Spleen (tissue), 13 donors: ENCODE measurements at regions of chr15 and their contacts with region 1.

Region 1: DNA sequence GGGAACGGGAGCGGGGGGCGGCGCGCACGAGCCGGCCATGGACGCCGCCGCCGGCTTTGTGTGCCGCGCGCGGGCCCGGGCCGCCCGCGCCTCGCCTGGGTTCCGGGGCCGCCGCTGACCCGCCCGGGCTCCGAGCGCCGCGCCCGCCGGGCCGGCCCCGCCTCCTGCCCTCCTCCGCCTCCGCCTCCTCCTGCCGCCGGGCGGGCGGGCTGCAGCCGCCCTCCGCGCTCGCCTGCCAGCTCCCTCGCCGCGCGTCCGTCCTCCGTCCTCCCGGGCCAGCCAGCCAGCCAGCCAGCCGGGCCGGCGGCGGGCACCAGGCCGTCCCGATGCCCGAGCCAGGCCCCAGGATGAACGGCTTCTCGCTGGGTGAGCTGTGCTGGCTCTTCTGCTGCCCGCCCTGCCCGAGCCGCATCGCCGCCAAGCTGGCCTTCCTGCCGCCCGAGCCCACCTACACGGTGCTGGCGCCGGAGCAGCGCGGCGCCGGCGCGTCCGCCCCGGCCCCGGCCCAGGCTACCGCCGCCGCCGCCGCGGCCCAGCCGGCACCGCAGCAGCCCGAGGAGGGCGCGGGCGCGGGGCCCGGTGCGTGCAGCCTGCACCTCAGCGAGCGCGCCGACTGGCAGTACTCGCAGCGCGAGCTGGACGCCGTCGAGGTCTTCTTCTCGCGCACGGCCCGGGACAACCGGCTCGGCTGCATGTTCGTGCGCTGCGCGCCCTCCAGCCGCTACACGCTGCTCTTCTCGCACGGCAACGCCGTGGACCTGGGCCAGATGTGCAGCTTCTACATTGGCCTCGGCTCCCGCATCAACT is at the start of gene ABHD17C:
- DNase-seq: peak; percentile 91
- H3K4me3 ChIP-seq: peak within 1 kb of the TSS; percentile 69 to 91 (median 72)
- H3K27ac ChIP-seq: peak within 1 kb of the TSS; percentile 57 to 89 (median 85)
- H3K4me1 ChIP-seq: peaks cover 9 to 54% (median 32%) of the 10 kb centered on the region in 6 donors
- H3K27me3 ChIP-seq: no peaks in the 10 kb centered on the region
- CTCF ChIP-seq: no peak
- POLR2A ChIP-seq: no peak
- total RNA-seq, gene ABHD17C: 9.9 to 17.0 (median 11.7) TPM

Region 2: DNA sequence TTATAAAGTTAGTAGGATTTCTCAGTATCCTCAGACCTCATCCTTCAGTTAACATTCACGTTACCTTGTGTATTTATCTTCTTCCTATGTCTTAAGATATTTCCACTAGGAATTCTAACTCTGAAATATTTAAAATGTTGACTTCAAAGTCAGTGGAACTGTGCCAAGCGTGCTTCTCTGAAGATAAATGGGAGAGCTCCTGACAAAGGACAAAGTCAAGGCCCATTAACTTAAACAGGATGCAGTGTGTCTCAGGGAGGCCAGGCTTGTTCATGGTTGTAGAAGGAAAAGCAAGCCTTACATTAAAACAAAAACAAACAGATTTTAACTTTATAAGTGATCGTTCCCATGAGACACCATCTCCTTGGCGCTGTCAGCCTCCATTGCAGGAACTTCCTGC is 41.3 kb after region 1 on chr15:
- intact Hi-C with region 1: no loop called
- DNase-seq: no peak
- H3K4me3 ChIP-seq: no peak overlapping the region
- H3K27ac ChIP-seq: peak overlapping the region in 7 of 8 donors; percentile 41 to 76 (median 69)
- H3K4me1 ChIP-seq: peaks cover 0 to 67% (median 34%) of the 10 kb centered on the region in 6 donors
- H3K27me3 ChIP-seq: no peaks in the 10 kb centered on the region
- CTCF ChIP-seq: no peak
- POLR2A ChIP-seq: no peak

Region 3: GRCh38 chr15:80776420-80777045 is 81.2 kb after region 1 on chr15:
- intact Hi-C with region 1: loop called (anchors 10 kb)
- DNase-seq: peak; percentile 77
- H3K4me3 ChIP-seq: no peak overlapping the region
- H3K27ac ChIP-seq: peak overlapping the region in 7 of 8 donors; percentile 29 to 59 (median 49)
- H3K4me1 ChIP-seq: peaks cover 16 to 56% (median 37%) of the 10 kb centered on the region in 6 donors
- H3K27me3 ChIP-seq: peaks cover 0 to 49% (median 25%) of the 10 kb centered on the region in 7 donors
- CTCF ChIP-seq: peak; percentile 44 to 87 (median 73)
- POLR2A ChIP-seq: no peak